ENCODE measurements at regions of chr15 and their contacts with region 1.

Region 1: DNA sequence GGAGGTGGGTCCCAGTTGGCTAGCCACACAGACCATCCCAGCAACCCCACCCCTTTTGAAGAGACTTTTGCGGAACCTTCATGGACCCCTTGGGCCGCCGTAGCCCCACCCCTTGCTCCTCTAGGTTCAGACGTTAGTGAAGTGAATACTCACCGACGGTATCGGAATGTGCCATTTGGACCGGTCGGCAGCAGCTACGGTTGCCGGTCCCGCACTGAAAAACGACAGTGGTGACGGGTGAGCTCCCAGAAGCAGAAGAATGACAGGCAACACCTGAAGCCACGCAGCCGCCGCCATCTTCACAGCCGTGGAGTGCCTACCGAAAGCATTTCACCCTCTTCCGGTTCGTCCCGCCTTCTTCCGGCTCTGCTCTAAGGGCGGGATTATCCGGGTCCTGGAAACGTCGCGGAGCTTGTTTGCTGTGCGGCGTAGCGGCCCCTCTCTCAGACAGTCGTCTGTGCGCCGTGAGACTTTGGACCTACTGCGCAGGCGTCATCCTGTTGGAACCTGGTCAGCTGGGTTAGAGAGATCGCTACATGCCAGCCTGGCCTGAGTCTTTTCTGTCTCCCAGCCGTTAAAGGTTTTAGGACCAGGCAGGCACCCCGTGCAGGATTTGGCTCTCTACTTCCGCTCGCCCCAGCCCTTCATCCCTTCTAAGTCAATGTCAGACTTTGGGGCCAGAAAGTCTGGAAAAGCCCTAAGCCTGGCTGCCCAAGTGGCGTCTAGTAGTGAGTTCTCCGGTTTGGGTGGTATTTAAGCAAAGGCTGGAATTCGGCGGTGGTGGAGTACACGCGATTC is at the starts of genes GANC and TMEM87A:
- DNase-seq: peak; percentile 98
- ATAC-seq: peak; percentile 96
- H3K4me3 Mint-ChIP-seq: peak within 1 kb of the TSS; percentile 81
- H3K27ac Mint-ChIP-seq: peak within 1 kb of the TSS; percentile 98
- H3K4me1 Mint-ChIP-seq: peaks cover 43% of the 10 kb centered on the region
- H3K27me3 Mint-ChIP-seq: no peaks in the 10 kb centered on the region
- total RNA-seq, gene GANC: 24.5 to 24.8 TPM
- total RNA-seq, gene TMEM87A: 20.5 to 29.0 TPM

Region 2: GRCh38 chr15:41621200-41622193 is 651.8 kb before region 1 on chr15:
- CTCF ChIA-PET with region 1: no interaction called
- POLR2A ChIA-PET with region 1: no interaction called
- intact Hi-C with region 1: loop called in 1 of 2 experiments (anchors 1 kb)
- DNase-seq: peak; percentile 91
- ATAC-seq: peak; percentile 90
- H3K4me3 Mint-ChIP-seq: peak overlapping the region; percentile 70
- H3K27ac Mint-ChIP-seq: peak overlapping the region; percentile 76
- H3K4me1 Mint-ChIP-seq: peaks cover 11% of the 10 kb centered on the region
- H3K27me3 Mint-ChIP-seq: no peaks in the 10 kb centered on the region

Region 3: GRCh38 chr15:41972253-41973242 is 300.8 kb before region 1 on chr15 and contains the start of gene EHD4:
- CTCF ChIA-PET with region 1: no interaction called
- POLR2A ChIA-PET with region 1: interaction called, 6 read pairs
- intact Hi-C with region 1: loop called in 1 of 2 experiments (anchors 1 kb)
- DNase-seq: peak; percentile 98
- ATAC-seq: peak; percentile 80
- H3K4me3 Mint-ChIP-seq: peak within 1 kb of the TSS; percentile 86
- H3K27ac Mint-ChIP-seq: peak within 1 kb of the TSS; percentile 94
- H3K4me1 Mint-ChIP-seq: peaks cover 53% of the 10 kb centered on the region
- H3K27me3 Mint-ChIP-seq: peaks cover 8% of the 10 kb centered on the region
- total RNA-seq, gene EHD4: 34.7 to 35.7 TPM

Region 4: GRCh38 chr15:42233107-42233506 is 40.2 kb before region 1 on chr15:
- CTCF ChIA-PET with region 1: no interaction called
- POLR2A ChIA-PET with region 1: no interaction called
- intact Hi-C with region 1: no loop called
- DNase-seq: no peak
- ATAC-seq: no peak
- H3K4me3 Mint-ChIP-seq: no peak overlapping the region
- H3K27ac Mint-ChIP-seq: no peak overlapping the region
- H3K4me1 Mint-ChIP-seq: no peaks in the 10 kb centered on the region
- H3K27me3 Mint-ChIP-seq: no peaks in the 10 kb centered on the region

Region 5: DNA sequence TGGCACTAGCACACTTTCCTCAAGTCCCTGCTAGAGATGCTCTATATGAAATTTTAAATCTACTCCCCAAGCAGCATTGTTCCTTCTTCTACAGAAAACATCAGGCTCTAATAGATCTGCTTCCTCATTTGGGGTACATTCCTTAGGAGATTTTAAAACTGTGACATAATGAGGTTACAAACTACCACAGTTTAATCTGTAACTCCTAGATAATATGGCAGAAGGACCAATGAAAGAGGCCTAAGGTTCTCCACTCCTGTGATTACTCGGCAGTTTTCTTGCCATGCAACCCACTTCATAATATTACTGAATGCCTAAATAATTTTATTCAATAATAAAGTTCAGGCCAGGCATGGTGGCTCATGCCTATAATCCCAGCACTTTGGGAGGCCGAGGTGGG is 201.5 kb after region 1 on chr15:
- CTCF ChIA-PET with region 1: interaction called, 3 read pairs
- POLR2A ChIA-PET with region 1: no interaction called
- intact Hi-C with region 1: loop called (anchors 5 to 10 kb)
- DNase-seq: no peak
- ATAC-seq: no peak
- H3K4me3 Mint-ChIP-seq: no peak overlapping the region
- H3K27ac Mint-ChIP-seq: no peak overlapping the region
- H3K4me1 Mint-ChIP-seq: peaks cover 10% of the 10 kb centered on the region
- H3K27me3 Mint-ChIP-seq: no peaks in the 10 kb centered on the region

Region 6: GRCh38 chr15:42575188-42576039 is 302.1 kb after region 1 on chr15 and contains the start of gene STARD9:
- CTCF ChIA-PET with region 1: no interaction called
- POLR2A ChIA-PET with region 1: no interaction called
- intact Hi-C with region 1: loop called (anchors 1 to 2 kb)
- DNase-seq: peak; percentile 97
- ATAC-seq: peak; percentile 92
- H3K4me3 Mint-ChIP-seq: peak within 1 kb of the TSS; percentile 86
- H3K27ac Mint-ChIP-seq: peak within 1 kb of the TSS; percentile 76
- H3K4me1 Mint-ChIP-seq: peaks cover 18% of the 10 kb centered on the region
- H3K27me3 Mint-ChIP-seq: peaks cover 21% of the 10 kb centered on the region
- total RNA-seq, gene STARD9: 4.0 to 4.1 TPM

Region 7: GRCh38 chr15:43185157-43186017 is 912.1 kb after region 1 on chr15 and contains the start of gene CCNDBP1:
- CTCF ChIA-PET with region 1: no interaction called
- POLR2A ChIA-PET with region 1: no interaction called
- intact Hi-C with region 1: loop called in 1 of 2 experiments (anchors 1 kb)
- DNase-seq: peak; percentile 94
- ATAC-seq: peak; percentile 96
- H3K4me3 Mint-ChIP-seq: peak within 1 kb of the TSS; percentile 90
- H3K27ac Mint-ChIP-seq: peak within 1 kb of the TSS; percentile 94
- H3K4me1 Mint-ChIP-seq: peaks cover 26% of the 10 kb centered on the region
- H3K27me3 Mint-ChIP-seq: no peaks in the 10 kb centered on the region
- total RNA-seq, gene CCNDBP1: 45.8 to 51.6 TPM